Caco-2 (cell line): ENCODE measurements at regions of chr2 and their contacts with region 1.

Region 1: DNA sequence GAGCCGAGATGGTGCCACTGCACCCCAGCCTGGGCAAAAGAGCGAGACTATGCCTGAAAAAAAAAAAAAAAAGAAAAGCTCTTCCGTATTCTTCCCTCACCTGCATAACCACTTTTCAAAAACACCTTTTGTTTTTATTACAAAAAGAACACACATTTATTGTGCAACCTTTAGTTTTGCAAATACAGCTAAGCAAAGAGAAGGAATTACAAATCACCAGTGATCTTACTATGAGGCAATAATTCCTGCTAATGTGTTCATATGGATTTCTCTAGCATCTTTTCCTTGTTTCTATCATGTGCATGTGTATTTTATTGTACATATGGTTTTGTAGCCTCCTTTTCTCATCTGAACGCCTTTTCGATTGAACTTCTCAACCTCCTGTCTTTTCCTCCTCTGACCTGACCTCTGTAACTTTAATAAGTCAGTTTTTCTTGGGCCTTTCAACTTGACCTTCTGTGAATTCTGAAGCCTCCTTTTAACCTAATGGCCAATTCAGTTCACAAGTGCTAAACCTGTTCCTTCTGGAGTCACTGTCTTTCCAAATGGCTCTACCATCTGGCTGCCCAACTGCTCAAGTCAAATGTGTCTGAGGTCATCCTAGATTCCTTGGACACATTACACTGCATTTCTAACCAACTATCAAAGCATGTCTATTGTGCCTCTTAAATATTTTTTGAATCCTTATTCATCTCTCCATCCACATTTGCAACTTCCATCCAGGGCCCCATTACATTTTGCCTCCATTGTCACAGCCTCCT is 59.1 kb upstream of the DAPL1 start:
- DNase-seq: no peak
- H3K4me3 ChIP-seq: no peak overlapping the region
- H3K4me3 Mint-ChIP-seq: no peak overlapping the region
- H3K27ac Mint-ChIP-seq: no peak overlapping the region
- H3K4me1 ChIP-seq: peaks cover 14% of the 10 kb centered on the region
- H3K4me1 Mint-ChIP-seq: peaks cover 4% of the 10 kb centered on the region
- H3K27me3 ChIP-seq: no peaks in the 10 kb centered on the region
- H3K27me3 Mint-ChIP-seq: no peaks in the 10 kb centered on the region
- CTCF ChIP-seq: no peak

Region 2: DNA sequence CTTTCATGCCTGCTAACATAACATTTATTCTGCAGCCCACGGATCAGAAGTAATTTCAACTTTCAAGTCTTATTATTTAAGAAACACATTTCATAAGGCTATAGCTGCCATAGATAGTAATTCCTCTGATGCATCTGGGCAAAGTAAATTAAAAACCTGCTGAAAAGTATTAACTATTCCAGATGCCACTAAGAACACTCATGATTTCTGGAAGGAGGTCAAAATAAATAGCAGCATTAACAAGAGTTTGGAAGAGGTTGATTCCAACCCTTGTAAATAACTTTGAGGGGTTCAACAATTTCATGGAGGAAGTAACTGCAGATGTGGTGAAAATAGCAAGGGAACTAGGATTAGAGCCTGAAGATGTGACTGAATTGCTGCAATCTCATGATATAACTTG is 357.1 kb before region 1 on chr2:
- CTCF ChIA-PET with region 1: no interaction called
- POLR2A ChIA-PET with region 1: no interaction called
- intact Hi-C with region 1: no loop called
- DNase-seq: no peak
- H3K4me3 ChIP-seq: no peak overlapping the region
- H3K4me3 Mint-ChIP-seq: no peak overlapping the region
- H3K27ac Mint-ChIP-seq: no peak overlapping the region
- H3K4me1 ChIP-seq: no peaks in the 10 kb centered on the region
- H3K4me1 Mint-ChIP-seq: no peaks in the 10 kb centered on the region
- H3K27me3 ChIP-seq: no peaks in the 10 kb centered on the region
- H3K27me3 Mint-ChIP-seq: no peaks in the 10 kb centered on the region
- CTCF ChIP-seq: no peak

Region 3: DNA sequence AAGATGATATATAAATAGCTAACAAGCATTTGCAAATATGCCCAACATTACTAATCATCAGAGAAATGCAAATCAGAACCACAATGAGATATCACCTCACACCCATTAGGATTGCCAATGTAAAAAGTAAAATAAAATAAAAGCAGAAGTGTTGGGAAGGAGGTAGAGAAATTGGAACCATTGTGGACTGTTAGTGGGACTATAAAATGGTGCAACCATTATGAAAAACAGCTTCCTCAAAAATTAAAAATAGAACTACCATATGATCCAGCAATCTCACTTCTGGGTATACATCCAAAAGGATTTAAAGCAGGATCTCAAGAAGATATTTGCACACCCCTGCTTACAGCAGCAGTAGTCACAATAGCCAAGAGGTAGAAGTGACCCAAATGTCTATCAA is 40.7 kb before region 1 on chr2:
- CTCF ChIA-PET with region 1: no interaction called
- POLR2A ChIA-PET with region 1: no interaction called
- intact Hi-C with region 1: loop called (anchors 5 kb)
- DNase-seq: no peak
- H3K4me3 ChIP-seq: no peak overlapping the region
- H3K4me3 Mint-ChIP-seq: no peak overlapping the region
- H3K27ac Mint-ChIP-seq: no peak overlapping the region
- H3K4me1 ChIP-seq: peaks cover 9% of the 10 kb centered on the region
- H3K4me1 Mint-ChIP-seq: no peaks in the 10 kb centered on the region
- H3K27me3 ChIP-seq: no peaks in the 10 kb centered on the region
- H3K27me3 Mint-ChIP-seq: no peaks in the 10 kb centered on the region
- CTCF ChIP-seq: no peak

Region 4: GRCh38 chr2:158772306-158773078 is 36.5 kb after region 1 on chr2:
- CTCF ChIA-PET with region 1: no interaction called
- POLR2A ChIA-PET with region 1: no interaction called
- intact Hi-C with region 1: no loop called
- DNase-seq: no peak
- H3K4me3 ChIP-seq: no peak overlapping the region
- H3K4me3 Mint-ChIP-seq: no peak overlapping the region
- H3K27ac Mint-ChIP-seq: no peak overlapping the region
- H3K4me1 ChIP-seq: peaks cover 18% of the 10 kb centered on the region
- H3K4me1 Mint-ChIP-seq: peaks cover 8% of the 10 kb centered on the region
- H3K27me3 ChIP-seq: no peaks in the 10 kb centered on the region
- H3K27me3 Mint-ChIP-seq: no peaks in the 10 kb centered on the region
- CTCF ChIP-seq: no peak